Breast epithelium (tissue), 4 donors: ENCODE measurements at regions of chr2 and their contacts with region 1.

Region 1: DNA sequence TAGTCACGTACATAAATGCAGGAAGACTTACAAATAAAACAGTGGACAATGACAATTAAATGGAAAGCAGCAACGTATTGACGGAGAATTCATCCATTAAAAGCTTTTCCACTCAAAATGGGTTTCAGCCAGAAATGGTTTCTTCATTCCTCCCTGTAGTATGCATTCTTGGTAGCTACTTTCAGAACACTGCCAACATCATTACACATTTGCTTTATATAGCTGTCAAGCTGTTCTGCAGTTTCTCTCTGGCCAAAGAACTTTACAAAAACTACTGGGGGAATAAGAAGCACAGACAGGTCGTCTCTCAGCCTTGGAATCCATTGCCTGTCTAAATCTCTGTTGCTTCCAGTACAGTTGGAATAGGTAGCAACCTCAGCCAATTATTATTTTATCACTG is 84.1 kb upstream of the NCKAP5 start:
- DNase-seq: no peak
- H3K4me3 ChIP-seq: no peak overlapping the region
- H3K27ac ChIP-seq: no peak overlapping the region
- H3K4me1 ChIP-seq: no peaks in the 10 kb centered on the region
- H3K27me3 ChIP-seq: no peaks in the 10 kb centered on the region
- CTCF ChIP-seq: no peak
- POLR2A ChIP-seq: no peak

Region 2: DNA sequence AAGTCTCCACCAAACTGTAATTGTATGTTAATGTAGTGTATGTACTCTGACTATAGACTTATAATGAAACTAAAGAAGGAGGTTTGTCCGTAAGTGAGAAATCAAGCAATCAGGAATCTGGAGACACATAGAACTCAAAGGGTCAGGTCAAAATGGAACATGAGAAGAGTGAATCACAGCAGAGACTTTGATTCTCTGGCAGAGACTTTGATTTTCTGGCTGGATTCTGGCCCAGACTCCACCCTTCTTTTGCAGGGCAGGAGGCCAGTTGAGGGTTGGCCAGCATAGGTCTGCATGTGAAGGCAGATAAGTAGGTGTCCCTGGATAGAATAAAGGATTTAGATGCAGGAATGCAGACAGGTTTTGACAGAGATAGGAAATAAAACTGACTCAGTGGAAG is 73.1 kb before region 1 on chr2:
- intact Hi-C with region 1: loop called (anchors 2 kb)
- DNase-seq: no peak
- H3K4me3 ChIP-seq: no peak overlapping the region
- H3K27ac ChIP-seq: no peak overlapping the region
- H3K4me1 ChIP-seq: peaks cover 0 to 5% of the 10 kb centered on the region in 2 donors
- H3K27me3 ChIP-seq: no peaks in the 10 kb centered on the region
- CTCF ChIP-seq: no peak
- POLR2A ChIP-seq: no peak